ENCODE measurements at regions of chr19 and their contacts with region 1.

Region 1: GRCh38 chr19:41641879-41642485 is 15.1 kb upstream of the CEACAM4 start:
- DNase-seq: peak; percentile 79
- CTCF ChIP-seq: peak; percentile 86

Region 2: GRCh38 chr19:41657157-41657556 is 15.2 kb after region 1 on chr19:
- CTCF ChIA-PET with region 1: interaction called, 79 read pairs
- POLR2A ChIA-PET with region 1: no interaction called
- DNase-seq: no peak
- CTCF ChIP-seq: no peak

Region 3: DNA sequence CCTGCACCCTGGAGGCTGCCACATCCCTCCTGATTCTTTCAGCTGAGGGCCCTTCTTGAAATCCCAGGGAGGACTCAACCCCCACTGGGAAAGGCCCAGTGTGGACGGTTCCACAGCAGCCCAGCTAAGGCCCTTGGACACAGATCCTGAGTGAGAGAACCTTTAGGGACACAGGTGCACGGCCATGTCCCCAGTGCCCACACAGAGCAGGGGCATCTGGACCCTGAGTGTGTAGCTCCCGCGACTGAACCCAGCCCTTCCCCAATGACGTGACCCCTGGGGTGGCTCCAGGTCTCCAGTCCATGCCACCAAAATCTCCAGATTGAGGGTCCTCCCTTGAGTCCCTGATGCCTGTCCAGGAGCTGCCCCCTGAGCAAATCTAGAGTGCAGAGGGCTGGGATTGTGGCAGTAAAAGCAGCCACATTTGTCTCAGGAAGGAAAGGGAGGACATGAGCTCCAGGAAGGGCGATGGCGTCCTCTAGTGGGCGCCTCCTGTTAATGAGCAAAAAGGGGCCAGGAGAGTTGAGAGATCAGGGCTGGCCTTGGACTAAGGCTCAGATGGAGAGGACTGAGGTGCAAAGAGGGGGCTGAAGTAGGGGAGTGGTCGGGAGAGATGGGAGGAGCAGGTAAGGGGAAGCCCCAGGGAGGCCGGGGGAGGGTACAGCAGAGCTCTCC is 59.6 kb after region 1 on chr19:
- CTCF ChIA-PET with region 1: interaction called, 17 read pairs
- POLR2A ChIA-PET with region 1: no interaction called
- DNase-seq: no peak
- CTCF ChIP-seq: peak; percentile 26

Region 4: DNA sequence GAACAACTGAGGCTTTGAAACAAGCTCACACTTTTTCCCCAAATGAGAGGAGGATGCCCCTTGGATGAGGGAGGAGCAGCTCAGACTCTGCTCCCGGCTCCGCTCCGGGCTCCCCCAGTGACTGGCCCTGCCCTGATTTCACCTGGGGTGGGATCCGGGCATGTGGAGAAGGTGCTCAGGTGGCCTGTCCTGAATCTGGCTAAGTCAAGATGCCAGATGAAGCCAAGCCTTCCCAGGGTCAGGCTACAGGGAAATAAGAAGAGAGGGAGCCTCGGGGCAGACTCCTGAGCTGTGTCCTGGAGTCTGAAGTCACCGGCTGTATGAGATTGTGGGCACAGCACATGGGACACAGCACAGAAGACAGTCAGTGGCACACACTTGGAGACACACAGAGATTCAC is 76.8 kb after region 1 on chr19:
- CTCF ChIA-PET with region 1: interaction called, 13 read pairs
- POLR2A ChIA-PET with region 1: no interaction called
- DNase-seq: no peak
- CTCF ChIP-seq: no peak